ENCODE measurements at regions of chr10 and their contacts with region 1.

Region 1: DNA sequence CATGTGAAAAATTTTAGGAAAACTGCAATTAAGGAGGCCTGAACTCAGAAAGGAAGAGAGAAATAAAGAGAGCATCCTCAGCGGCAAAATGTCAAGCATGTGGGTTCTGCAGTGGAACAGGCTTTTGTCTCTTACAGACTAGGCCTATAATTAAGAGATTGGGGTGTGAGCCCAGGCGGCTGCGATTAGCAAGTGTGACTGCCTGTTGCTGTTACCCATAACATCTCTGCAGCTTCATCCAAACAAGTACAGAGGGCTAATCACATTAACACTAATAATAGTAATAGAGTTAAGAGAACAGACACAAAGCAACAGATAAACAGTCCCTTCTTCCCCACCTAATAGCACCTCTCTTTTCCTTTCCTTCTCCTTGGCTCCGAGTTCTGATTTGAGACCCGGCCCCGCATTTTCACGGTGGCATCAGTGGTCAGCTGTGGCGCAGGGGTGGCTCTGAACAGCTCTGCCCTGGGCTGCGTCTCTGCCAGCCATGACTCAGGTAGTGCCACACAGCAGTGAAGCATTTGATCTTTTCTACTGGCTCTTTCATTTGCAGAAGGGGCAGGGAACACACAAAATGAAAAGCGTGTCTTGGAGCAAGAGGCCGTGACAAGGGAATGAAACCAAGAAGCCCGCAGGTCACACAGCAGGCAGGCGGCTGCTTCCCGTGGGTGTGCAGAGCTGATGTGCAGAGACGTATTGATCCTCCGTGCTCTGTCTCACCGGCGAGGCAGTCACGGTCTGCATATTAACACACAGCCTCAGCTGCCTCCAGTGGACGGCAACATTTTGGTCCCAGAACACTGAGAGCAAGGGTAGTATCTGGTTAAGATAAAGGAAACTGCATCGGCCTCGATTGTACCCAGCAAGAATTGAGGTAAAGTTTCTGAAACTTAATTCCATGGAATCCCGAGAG is 103.1 kb downstream of the KLF6 start:
- DNase-seq: no peak
- H3K4me3 Mint-ChIP-seq: no peak overlapping the region
- H3K27ac Mint-ChIP-seq: no peak overlapping the region
- H3K4me1 Mint-ChIP-seq: peaks cover 22% of the 10 kb centered on the region
- H3K27me3 Mint-ChIP-seq: no peaks in the 10 kb centered on the region

Region 2: DNA sequence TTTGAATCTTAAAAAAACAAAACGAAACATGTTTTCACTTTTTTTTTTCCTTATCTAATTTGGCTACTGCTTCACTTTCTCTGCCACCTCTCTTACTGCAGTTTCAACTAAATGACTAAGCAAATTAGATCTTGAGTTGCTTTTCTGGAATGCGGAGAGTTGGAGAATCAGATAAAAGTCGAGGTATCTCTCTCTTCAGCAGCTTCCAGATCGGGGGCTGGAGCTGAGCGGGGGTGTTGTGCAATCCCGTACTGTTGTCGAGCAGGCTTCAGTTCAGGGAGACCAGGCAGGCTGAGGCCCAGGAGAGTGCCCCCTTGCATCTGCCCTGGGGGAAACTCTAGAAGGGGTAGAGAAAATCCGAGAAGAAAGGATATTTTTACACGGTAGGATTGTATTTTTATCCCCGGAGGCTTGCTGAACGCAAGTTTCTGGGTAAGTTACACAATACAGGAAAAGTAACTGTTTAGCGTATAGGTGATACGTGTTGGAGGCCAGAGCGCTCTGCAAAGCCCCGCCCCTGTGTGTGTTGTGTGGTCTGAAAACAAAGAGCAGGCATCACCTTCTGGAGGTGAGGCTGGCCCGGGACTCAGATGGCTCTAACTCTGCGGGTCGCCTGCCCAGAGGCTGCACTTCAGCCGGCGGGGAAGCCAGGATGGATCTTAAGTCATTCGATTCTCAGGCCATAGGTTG is 13.5 kb before region 1 on chr10:
- intact Hi-C with region 1: loop called (anchors 2 kb)
- DNase-seq: peak; percentile 34
- H3K4me3 Mint-ChIP-seq: peak overlapping the region; percentile 58
- H3K27ac Mint-ChIP-seq: peak overlapping the region; percentile 60
- H3K4me1 Mint-ChIP-seq: peaks cover 30% of the 10 kb centered on the region
- H3K27me3 Mint-ChIP-seq: peaks cover 16% of the 10 kb centered on the region

Region 3: GRCh38 chr10:3740157-3740871 is 58.4 kb after region 1 on chr10:
- intact Hi-C with region 1: loop called (anchors 1 kb)
- DNase-seq: no peak
- H3K4me3 Mint-ChIP-seq: no peak overlapping the region
- H3K27ac Mint-ChIP-seq: no peak overlapping the region
- H3K4me1 Mint-ChIP-seq: peaks cover 27% of the 10 kb centered on the region
- H3K27me3 Mint-ChIP-seq: peaks cover 5% of the 10 kb centered on the region